CD14-positive monocyte (primary cell): ENCODE measurements at regions of chr10 and their contacts with region 1.

Region 1: GRCh38 chr10:72273410-72274212 is at the start of gene DDIT4:
- DNase-seq: peak; percentile 97
- H3K4me3 ChIP-seq: peak within 1 kb of the TSS; percentile 62 to 98 (median 67)
- H3K4me3 Mint-ChIP-seq: peak within 1 kb of the TSS; percentile 98
- H3K27ac ChIP-seq: peak within 1 kb of the TSS; percentile 64 to 91
- H3K27ac Mint-ChIP-seq: peak within 1 kb of the TSS; percentile 86 to 95 (median 94)
- H3K4me1 ChIP-seq: peaks cover 23 to 32% of the 10 kb centered on the region in 2 donors
- H3K4me1 Mint-ChIP-seq: peaks cover 33% of the 10 kb centered on the region
- H3K27me3 ChIP-seq: no peaks in the 10 kb centered on the region
- H3K27me3 Mint-ChIP-seq: peaks cover 2 to 13% (median 13%) of the 10 kb centered on the region in 3 donors
- CTCF ChIP-seq: no peak
- polyA plus RNA-seq, gene DDIT4: 26.1 to 611 (median 45.8) TPM

Region 2: GRCh38 chr10:72215652-72216549 is 57.7 kb before region 1 on chr10 and contains the starts of genes ANAPC16 and ASCC1:
- intact Hi-C with region 1: loop called in 1 of 2 experiments (anchors 5 kb)
- DNase-seq: peak; percentile 83 to 86 (median 84)
- H3K4me3 ChIP-seq: peak within 1 kb of the TSS; percentile 70 to 97 (median 86)
- H3K4me3 Mint-ChIP-seq: peak within 1 kb of the TSS; percentile 98
- H3K27ac ChIP-seq: peak within 1 kb of the TSS; percentile 93 to 99
- H3K27ac Mint-ChIP-seq: peak within 1 kb of the TSS; percentile 97 to 100 (median 99)
- H3K4me1 ChIP-seq: peaks cover 33 to 41% of the 10 kb centered on the region in 2 donors
- H3K4me1 Mint-ChIP-seq: peaks cover 27% of the 10 kb centered on the region
- H3K27me3 ChIP-seq: no peaks in the 10 kb centered on the region
- H3K27me3 Mint-ChIP-seq: peaks cover 0 to 1% (median 0%) of the 10 kb centered on the region in 3 donors
- CTCF ChIP-seq: no peak
- polyA plus RNA-seq, gene ANAPC16: 65.5 to 167 (median 148) TPM
- polyA plus RNA-seq, gene ASCC1: 8.2 to 20.9 (median 17.9) TPM

Region 3: GRCh38 chr10:72254813-72255568 is 18.6 kb before region 1 on chr10:
- intact Hi-C with region 1: loop called in 1 of 2 experiments (anchors 2 kb)
- DNase-seq: peak; percentile 64 to 70 (median 69)
- H3K4me3 ChIP-seq: peak overlapping the region in 1 of 3 experiments; percentile 69
- H3K4me3 Mint-ChIP-seq: peak overlapping the region; percentile 71 to 84
- H3K27ac ChIP-seq: peak overlapping the region in 1 of 2 donors; percentile 31
- H3K27ac Mint-ChIP-seq: peak overlapping the region in 4 of 7 donors; percentile 43 to 79 (median 78)
- H3K4me1 ChIP-seq: peaks cover 39 to 44% of the 10 kb centered on the region in 2 donors
- H3K4me1 Mint-ChIP-seq: peaks cover 37% of the 10 kb centered on the region
- H3K27me3 ChIP-seq: no peaks in the 10 kb centered on the region
- H3K27me3 Mint-ChIP-seq: peaks cover 1 to 2% (median 2%) of the 10 kb centered on the region in 3 donors
- CTCF ChIP-seq: no peak

Region 4: DNA sequence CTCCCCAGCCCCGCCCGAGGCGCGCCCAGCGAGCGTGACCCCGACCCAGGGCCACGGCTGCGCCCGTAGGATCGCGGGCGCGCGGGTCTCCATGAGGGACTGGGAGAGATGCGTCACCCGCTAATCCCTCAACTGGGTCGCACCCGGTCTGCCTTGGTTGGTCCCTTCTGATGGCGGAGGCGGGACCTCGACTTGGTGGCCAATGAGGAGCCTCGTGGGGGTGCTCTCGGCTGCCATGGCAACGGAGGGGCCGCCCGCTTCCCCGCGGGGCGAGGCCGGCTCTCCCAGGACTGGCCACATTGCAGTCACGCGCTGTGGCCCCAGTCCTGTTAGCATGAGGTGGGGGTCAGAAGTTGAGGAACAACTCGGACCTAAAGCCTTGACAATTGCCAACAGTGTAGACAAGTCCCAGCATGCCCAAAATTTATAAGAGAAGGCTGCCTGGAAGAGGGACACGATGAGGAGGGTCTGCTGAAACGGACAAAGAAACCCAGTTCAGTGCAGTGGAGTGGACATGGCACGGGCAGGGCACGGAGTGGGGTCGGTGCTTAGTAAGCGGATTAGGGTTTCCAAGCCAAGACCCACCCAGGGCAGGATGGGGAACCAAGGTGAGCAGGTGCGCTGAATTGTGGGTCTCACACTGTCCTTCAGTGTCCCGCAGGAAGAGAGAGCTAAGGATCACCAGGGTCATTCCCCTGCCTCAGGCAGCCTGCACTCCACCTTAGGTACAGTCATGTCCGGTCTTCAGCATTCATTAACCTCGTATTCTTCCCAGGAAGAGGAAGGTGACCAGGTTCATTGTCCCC is 24.6 kb after region 1 on chr10:
- intact Hi-C with region 1: loop called in 1 of 2 experiments (anchors 2 kb)
- DNase-seq: peak; percentile 99 to 100 (median 99)
- H3K4me3 ChIP-seq: peak overlapping the region; percentile 30 to 69 (median 62)
- H3K4me3 Mint-ChIP-seq: peak overlapping the region; percentile 67 to 82
- H3K27ac ChIP-seq: peak overlapping the region; percentile 100
- H3K27ac Mint-ChIP-seq: peak overlapping the region; percentile 97 to 100 (median 99)
- H3K4me1 ChIP-seq: peaks cover 29 to 33% of the 10 kb centered on the region in 2 donors
- H3K4me1 Mint-ChIP-seq: peaks cover 40% of the 10 kb centered on the region
- H3K27me3 ChIP-seq: no peaks in the 10 kb centered on the region
- H3K27me3 Mint-ChIP-seq: peaks cover 0 to 3% (median 0%) of the 10 kb centered on the region in 3 donors
- CTCF ChIP-seq: no peak

Region 5: GRCh38 chr10:72319416-72320254 is 46.0 kb after region 1 on chr10:
- intact Hi-C with region 1: loop called in 1 of 2 experiments (anchors 5 kb)
- DNase-seq: peak; percentile 93 to 96 (median 94)
- H3K4me3 ChIP-seq: peak overlapping the region; percentile 37 to 73 (median 47)
- H3K4me3 Mint-ChIP-seq: peak overlapping the region; percentile 73 to 79
- H3K27ac ChIP-seq: peak overlapping the region; percentile 98 to 100
- H3K27ac Mint-ChIP-seq: peak overlapping the region; percentile 97 to 100 (median 99)
- H3K4me1 ChIP-seq: peaks cover 89 to 99% of the 10 kb centered on the region in 2 donors
- H3K4me1 Mint-ChIP-seq: peaks cover 89% of the 10 kb centered on the region
- H3K27me3 ChIP-seq: no peaks in the 10 kb centered on the region
- H3K27me3 Mint-ChIP-seq: no peaks in the 10 kb centered on the region
- CTCF ChIP-seq: no peak

Region 6: DNA sequence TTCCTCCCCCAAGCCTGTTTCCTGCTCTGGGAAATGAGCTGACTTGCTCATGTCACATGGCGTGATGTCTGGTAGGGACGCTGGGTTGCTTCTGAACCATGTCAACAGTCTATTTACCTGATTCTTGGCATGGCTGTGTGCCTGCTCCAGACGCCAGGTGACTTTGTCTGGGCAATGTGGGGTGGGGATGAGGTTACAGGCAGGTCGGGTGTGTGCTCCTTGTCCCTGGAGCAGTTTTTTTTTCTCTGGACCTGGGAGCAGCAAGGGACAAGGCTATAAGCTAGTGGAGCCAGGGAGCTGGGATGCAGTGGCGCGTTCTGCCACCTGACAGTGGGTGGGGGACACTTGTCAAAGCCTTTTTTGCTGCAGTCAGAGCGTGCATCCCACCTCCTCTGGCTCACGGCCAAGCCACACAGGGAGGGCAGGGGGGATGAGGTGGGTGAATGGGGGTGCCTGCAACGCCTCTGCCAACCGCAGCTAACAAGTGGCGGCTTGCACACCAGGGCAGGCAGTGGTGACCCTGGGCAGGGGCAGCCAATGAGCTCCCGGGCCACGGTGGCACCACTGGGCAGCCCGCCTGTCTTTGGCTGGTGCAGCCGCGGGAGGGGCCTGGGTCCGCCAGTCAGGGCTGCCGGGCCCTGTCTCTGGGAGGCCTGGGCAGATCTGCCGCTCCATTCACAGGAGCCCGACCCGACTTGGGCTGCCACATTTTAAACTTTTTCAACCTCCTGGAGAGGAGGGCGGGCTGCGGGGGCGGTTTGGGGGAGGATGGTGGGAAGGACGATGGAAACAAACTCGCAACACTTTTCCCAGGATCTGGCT is 58.2 kb after region 1 on chr10:
- intact Hi-C with region 1: loop called (anchors 2 to 5 kb)
- DNase-seq: peak; percentile 90 to 93 (median 93)
- H3K4me3 ChIP-seq: peak overlapping the region in 1 of 3 experiments; percentile 67
- H3K4me3 Mint-ChIP-seq: peak overlapping the region; percentile 43 to 80
- H3K27ac ChIP-seq: peak overlapping the region; percentile 60 to 86
- H3K27ac Mint-ChIP-seq: peak overlapping the region; percentile 89 to 97 (median 95)
- H3K4me1 ChIP-seq: peaks cover 88 to 94% of the 10 kb centered on the region in 2 donors
- H3K4me1 Mint-ChIP-seq: peaks cover 91% of the 10 kb centered on the region
- H3K27me3 ChIP-seq: no peaks in the 10 kb centered on the region
- H3K27me3 Mint-ChIP-seq: peaks cover 0 to 8% (median 3%) of the 10 kb centered on the region in 3 donors
- CTCF ChIP-seq: peak; percentile 65

Region 7: DNA sequence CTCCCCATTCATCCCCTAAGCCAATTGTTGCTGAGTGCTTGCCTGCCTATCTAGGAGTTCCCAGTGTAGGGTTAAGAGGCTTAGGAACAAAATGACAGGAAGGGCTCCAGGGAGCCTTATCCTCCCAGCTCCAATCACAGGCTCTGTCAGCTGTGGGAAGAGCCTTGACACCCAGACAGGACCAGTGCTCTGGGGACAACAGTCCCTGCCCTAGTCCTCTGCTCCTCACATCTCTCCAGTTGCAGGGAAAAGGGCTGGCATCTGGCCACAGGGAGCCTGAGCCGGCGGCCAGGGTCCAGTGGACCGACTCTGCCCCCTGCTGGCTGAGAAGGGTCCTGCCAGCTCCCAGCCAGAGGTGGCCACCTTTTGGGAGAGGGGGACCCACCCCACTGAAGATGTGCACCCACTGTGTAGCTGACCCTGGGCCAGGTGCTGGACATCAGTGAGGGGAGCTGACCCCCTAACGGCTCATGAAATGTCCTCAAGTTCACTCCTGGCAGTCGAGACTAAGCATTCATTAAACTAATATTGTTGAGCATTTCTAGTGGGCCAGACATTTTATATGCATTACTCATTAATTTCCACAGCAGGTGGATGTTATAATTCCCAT is 63.5 kb after region 1 on chr10:
- intact Hi-C with region 1: loop called (anchors 2 to 5 kb)
- DNase-seq: peak; percentile 53 to 66 (median 64)
- H3K4me3 ChIP-seq: no peak overlapping the region
- H3K4me3 Mint-ChIP-seq: no peak overlapping the region
- H3K27ac ChIP-seq: no peak overlapping the region
- H3K27ac Mint-ChIP-seq: peak overlapping the region in 5 of 7 donors; percentile 15 to 78 (median 32)
- H3K4me1 ChIP-seq: peaks cover 45 to 54% of the 10 kb centered on the region in 2 donors
- H3K4me1 Mint-ChIP-seq: peaks cover 56% of the 10 kb centered on the region
- H3K27me3 ChIP-seq: no peaks in the 10 kb centered on the region
- H3K27me3 Mint-ChIP-seq: peaks cover 0 to 1% (median 0%) of the 10 kb centered on the region in 3 donors
- CTCF ChIP-seq: peak; percentile 99